Activated T-helper 2 cell treated with anti-CD3 and anti-CD28 coated beads, Interferon-gamma antibody, Interleukin-2, Interleukin-4, amounts not matched to agents 10 μg/mL and 5 μg/mL and 100 μg/mL, durations not matched to agents 14 hours and 24 hours and 36 hours (primary cell): ENCODE measurements at regions of chr6 and their contacts with region 1.

Region 1: GRCh38 chr6:36360241-36361054 is 23.8 kb upstream of the BNIP5 start:
- DNase-seq: peak; percentile 59
- H3K4me3 Mint-ChIP-seq: no peak overlapping the region
- H3K27ac Mint-ChIP-seq: no peak overlapping the region
- H3K4me1 Mint-ChIP-seq: peaks cover 38% of the 10 kb centered on the region
- H3K27me3 Mint-ChIP-seq: peaks cover 25% of the 10 kb centered on the region

Region 2: DNA sequence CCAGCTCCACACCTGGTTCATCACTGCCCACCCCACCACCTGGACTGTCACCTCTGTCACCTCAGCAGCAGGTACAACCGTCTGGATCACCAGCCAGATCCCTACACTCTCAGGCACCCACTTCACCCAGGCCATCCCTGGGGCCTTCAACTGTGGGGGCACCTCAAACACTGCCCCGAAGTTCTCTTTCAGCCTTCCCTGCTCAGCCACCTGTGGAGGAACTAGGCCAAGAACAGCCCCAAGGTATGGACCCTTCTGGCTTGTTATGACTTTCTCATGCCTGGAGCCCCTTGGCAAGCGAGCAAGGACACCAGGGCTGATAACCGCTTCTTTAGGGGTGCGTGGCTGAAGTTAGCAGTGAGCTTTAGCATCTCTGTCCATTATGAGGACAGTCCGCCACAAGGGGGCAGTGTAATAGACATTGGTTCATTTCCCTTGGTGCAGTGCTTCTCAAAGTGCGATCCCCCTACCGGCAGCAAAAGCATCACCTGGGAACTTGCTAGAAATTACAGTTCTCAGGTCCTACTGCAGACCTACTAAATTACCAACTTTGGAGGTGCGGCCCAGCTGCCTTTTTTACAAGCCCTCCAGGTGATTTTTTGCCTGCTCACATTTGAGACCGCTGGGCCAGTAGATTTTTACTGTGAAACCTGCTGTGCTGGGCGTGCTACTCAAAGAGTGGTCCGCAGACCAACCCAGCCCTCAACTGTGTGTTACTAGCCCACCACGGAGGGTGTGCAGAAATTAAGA is 58.0 kb before region 1 on chr6:
- intact Hi-C with region 1: loop called (anchors 1 kb)
- DNase-seq: peak; percentile 84
- H3K4me3 Mint-ChIP-seq: no peak overlapping the region
- H3K27ac Mint-ChIP-seq: no peak overlapping the region
- H3K4me1 Mint-ChIP-seq: peaks cover 5% of the 10 kb centered on the region
- H3K27me3 Mint-ChIP-seq: peaks cover 23% of the 10 kb centered on the region

Region 3: GRCh38 chr6:36340618-36341454 is 19.6 kb before region 1 on chr6:
- intact Hi-C with region 1: loop called (anchors 1 kb)
- DNase-seq: peak; percentile 50
- H3K4me3 Mint-ChIP-seq: peak overlapping the region; percentile 46
- H3K27ac Mint-ChIP-seq: no peak overlapping the region
- H3K4me1 Mint-ChIP-seq: peaks cover 9% of the 10 kb centered on the region
- H3K27me3 Mint-ChIP-seq: peaks cover 36% of the 10 kb centered on the region

Region 4: DNA sequence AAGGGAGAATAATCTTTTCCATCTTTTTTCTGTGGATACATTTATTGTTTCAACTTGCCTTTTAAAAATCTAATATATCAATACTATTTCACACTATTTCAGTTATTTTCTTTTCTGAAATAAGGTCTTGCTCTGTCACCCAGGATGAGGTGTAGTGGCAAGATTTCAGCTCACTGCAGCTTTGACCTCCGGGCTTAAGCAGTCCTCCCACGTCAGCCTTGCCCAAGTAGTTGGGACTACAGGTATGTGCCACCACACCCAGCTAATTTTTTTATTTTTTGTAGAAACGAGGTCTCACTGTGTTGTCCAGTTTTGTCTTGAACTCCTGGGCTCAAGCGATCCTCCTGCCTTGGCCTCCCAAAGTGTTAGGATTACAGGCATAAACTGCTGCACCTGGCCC is 90.9 kb after region 1 on chr6:
- intact Hi-C with region 1: no loop called
- DNase-seq: no peak
- H3K4me3 Mint-ChIP-seq: no peak overlapping the region
- H3K27ac Mint-ChIP-seq: no peak overlapping the region
- H3K4me1 Mint-ChIP-seq: peaks cover 4% of the 10 kb centered on the region
- H3K27me3 Mint-ChIP-seq: no peaks in the 10 kb centered on the region